ENCODE measurements at regions of chr2 and their contacts with region 1.

Region 1: GRCh38 chr2:9555297-9556141 is at the start of gene ADAM17:
- DNase-seq: peak; percentile 97 to 99 (median 98)
- ATAC-seq: peak; percentile 89 to 98 (median 96)
- H3K4me3 ChIP-seq: peak within 1 kb of the TSS; percentile 53 to 98 (median 90)
- H3K27ac ChIP-seq: peak within 1 kb of the TSS; percentile 98 to 100 (median 99)
- H3K4me1 ChIP-seq: peaks cover 11 to 60% (median 40%) of the 10 kb centered on the region in 12 donors
- H3K27me3 ChIP-seq: no peaks in the 10 kb centered on the region
- CTCF ChIP-seq: peak; percentile 24 to 71 (median 46)
- POLR2A ChIP-seq: peak; percentile 41 to 87
- total RNA-seq, gene ADAM17: 8.9 to 22.4 (median 15.1) TPM

Region 2: GRCh38 chr2:9205963-9206948 is 349.3 kb before region 1 on chr2 and contains the start of gene ASAP2:
- intact Hi-C with region 1: no loop called
- DNase-seq: peak; percentile 74 to 89 (median 77)
- ATAC-seq: peak; percentile 63 to 85 (median 82)
- H3K4me3 ChIP-seq: peak within 1 kb of the TSS; percentile 60 to 99 (median 86)
- H3K27ac ChIP-seq: peak within 1 kb of the TSS; percentile 56 to 94 (median 88)
- H3K4me1 ChIP-seq: peaks cover 0 to 40% (median 18%) of the 10 kb centered on the region in 12 donors
- H3K27me3 ChIP-seq: peaks cover 0 to 12% (median 0%) of the 10 kb centered on the region in 9 donors
- CTCF ChIP-seq: peak; percentile 65 to 94 (median 82)
- POLR2A ChIP-seq: no peak
- total RNA-seq, gene ASAP2: 7.4 to 17.0 (median 12.9) TPM

Region 3: DNA sequence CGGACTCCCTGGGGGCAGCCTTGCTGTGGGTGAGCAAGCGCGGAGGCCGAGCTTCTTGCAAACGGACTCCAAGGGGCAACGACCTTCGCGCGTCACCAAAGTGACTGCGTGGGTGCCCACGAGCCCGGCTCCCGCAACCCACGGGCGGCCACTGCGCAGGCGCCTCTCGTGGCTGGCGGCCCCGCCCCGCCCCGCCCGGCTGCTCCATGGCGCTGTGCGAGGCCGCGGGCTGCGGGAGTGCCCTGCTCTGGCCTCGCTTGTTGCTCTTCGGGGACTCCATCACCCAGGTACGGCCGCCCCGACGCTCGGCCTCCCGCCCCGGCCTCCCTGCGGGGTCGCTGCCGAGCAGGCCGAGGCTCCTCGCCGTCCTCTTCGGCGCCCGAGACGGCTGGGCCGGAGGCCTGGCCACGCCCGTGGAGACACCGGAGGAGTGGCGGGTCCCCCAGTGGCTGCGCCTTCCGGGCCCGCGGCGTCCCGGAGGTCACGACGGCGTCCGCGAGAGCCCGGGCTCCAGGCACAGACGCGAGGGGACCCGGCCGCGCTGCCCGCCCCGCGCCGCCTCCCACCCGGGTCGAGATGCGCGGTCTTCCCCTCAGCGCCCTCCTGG is 81.1 kb before region 1 on chr2 and contains the start of gene IAH1:
- intact Hi-C with region 1: loop called in 2 of 10 experiments (anchors 5 kb)
- DNase-seq: peak; percentile 60 to 86 (median 75)
- ATAC-seq: peak; percentile 57 to 93 (median 82)
- H3K4me3 ChIP-seq: peak within 1 kb of the TSS; percentile 59 to 93 (median 82)
- H3K27ac ChIP-seq: peak within 1 kb of the TSS; percentile 52 to 93 (median 84)
- H3K4me1 ChIP-seq: peaks cover 0 to 42% (median 32%) of the 10 kb centered on the region in 12 donors
- H3K27me3 ChIP-seq: no peaks in the 10 kb centered on the region
- CTCF ChIP-seq: peak in 2 of 12 donors; percentile 11 to 12
- POLR2A ChIP-seq: peak in 1 of 2 donors; percentile 65
- total RNA-seq, gene IAH1: 58.4 to 101 (median 78.0) TPM

Region 4: GRCh38 chr2:9613291-9613690 is 57.8 kb after region 1 on chr2:
- intact Hi-C with region 1: loop called in 2 of 10 experiments (anchors 5 kb)
- DNase-seq: no peak
- ATAC-seq: peak in 3 of 4 donors; percentile 29 to 44 (median 31)
- H3K4me3 ChIP-seq: no peak overlapping the region
- H3K27ac ChIP-seq: peak overlapping the region in 2 of 12 donors; percentile 31 to 41
- H3K4me1 ChIP-seq: peaks cover 0 to 92% (median 70%) of the 10 kb centered on the region in 12 donors
- H3K27me3 ChIP-seq: no peaks in the 10 kb centered on the region
- CTCF ChIP-seq: no peak
- POLR2A ChIP-seq: no peak

Region 5: DNA sequence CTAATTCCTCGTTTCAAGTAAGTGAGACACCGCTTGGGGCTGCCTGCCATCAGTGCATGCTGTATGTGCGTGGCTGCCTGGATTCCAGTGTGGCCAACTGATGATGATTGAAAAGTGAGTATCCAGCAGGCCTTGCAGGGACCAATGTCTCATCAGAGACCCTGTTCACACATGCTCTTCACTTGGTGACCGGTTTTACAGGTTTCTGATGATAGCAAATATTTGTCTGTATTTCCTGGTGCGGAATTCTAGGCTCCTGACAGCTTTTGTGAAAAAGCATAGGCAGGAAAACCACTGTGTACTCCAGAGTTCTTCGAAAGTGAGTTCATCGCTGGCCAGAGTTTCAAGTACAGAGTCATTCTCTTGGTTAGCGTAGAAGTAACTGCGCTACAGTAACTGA is 89.1 kb after region 1 on chr2:
- intact Hi-C with region 1: no loop called
- DNase-seq: no peak
- ATAC-seq: no peak
- H3K4me3 ChIP-seq: no peak overlapping the region
- H3K27ac ChIP-seq: no peak overlapping the region
- H3K4me1 ChIP-seq: peaks cover 0 to 6% (median 3%) of the 10 kb centered on the region in 12 donors
- H3K27me3 ChIP-seq: no peaks in the 10 kb centered on the region
- CTCF ChIP-seq: no peak
- POLR2A ChIP-seq: no peak

Region 6: DNA sequence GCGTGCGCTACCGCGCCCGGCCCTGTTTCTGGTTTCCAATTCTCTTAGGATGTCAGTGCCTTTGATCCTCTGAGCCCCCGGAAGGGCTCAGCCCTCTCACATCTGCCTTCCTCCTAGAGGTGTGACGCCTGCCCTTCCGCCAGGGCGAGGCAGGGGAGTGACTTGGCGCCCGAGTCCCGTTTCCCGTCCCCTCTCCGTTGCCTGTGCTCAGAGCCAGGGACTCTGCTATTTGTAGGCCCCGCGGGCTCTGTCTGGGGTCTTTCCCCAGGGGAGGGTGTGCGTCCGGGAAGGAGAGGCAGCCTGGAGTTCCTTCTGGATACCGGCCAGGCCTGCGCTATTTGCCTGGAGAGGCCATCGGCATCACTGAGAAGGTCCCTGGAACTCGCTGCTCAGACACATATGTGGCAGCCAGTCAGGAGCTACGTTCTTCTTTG is 184.0 kb after region 1 on chr2:
- intact Hi-C with region 1: loop called in 2 of 10 experiments (anchors 5 to 10 kb)
- DNase-seq: peak; percentile 90 to 93 (median 90)
- ATAC-seq: peak; percentile 71 to 94 (median 86)
- H3K4me3 ChIP-seq: peak overlapping the region in 10 of 12 donors; percentile 23 to 53 (median 44)
- H3K27ac ChIP-seq: peak overlapping the region; percentile 35 to 94 (median 86)
- H3K4me1 ChIP-seq: peaks cover 0 to 33% (median 24%) of the 10 kb centered on the region in 12 donors
- H3K27me3 ChIP-seq: no peaks in the 10 kb centered on the region
- CTCF ChIP-seq: peak in 1 of 12 donors; percentile 8
- POLR2A ChIP-seq: no peak

Region 7: DNA sequence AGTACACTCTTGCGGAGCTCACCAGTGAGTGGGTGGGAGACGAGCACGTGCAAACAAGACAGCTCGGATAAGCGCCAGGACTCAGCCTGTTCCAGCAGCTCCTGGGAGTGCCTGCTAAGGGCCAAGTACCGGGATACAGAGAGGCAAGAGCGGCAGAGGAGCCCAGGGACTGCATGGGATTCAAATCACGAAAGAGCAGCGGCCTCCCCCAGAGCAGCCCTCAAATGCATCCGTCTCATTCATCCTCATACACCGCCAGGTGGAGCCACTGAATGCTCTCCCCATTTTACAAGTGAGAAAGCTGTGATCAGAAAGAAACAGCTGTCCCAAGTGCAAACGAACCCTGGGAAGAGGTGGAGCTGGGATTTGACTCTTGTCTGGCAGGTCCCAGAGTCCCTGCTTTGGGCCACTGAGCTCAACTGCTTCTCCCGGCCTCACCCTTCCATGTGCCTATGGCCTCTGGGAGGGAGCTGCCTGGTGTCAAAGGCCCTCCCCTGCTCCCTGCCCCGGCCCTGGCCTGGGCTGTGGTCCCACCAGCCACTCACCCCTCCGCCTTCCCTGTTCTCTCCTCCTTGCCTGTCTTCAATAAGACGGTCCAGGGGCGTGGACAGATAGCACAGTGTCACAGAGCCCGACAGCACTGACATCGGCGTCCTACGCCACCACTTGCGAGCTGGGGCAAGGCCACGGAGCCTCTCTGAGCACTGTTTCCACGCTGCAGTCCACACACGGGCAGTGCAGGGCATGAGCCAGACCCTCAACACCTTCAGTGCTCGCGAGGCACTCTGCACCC is 215.0 kb after region 1 on chr2:
- intact Hi-C with region 1: loop called in 4 of 10 experiments (anchors 10 kb)
- DNase-seq: peak; percentile 65 to 84 (median 70)
- ATAC-seq: peak; percentile 38 to 60 (median 48)
- H3K4me3 ChIP-seq: peak overlapping the region in 4 of 12 donors; percentile 14 to 28 (median 20)
- H3K27ac ChIP-seq: peak overlapping the region in 10 of 12 donors; percentile 11 to 78 (median 74)
- H3K4me1 ChIP-seq: peaks cover 0 to 56% (median 23%) of the 10 kb centered on the region in 12 donors
- H3K27me3 ChIP-seq: no peaks in the 10 kb centered on the region
- CTCF ChIP-seq: peak; percentile 56 to 80 (median 72)
- POLR2A ChIP-seq: no peak

Region 8: DNA sequence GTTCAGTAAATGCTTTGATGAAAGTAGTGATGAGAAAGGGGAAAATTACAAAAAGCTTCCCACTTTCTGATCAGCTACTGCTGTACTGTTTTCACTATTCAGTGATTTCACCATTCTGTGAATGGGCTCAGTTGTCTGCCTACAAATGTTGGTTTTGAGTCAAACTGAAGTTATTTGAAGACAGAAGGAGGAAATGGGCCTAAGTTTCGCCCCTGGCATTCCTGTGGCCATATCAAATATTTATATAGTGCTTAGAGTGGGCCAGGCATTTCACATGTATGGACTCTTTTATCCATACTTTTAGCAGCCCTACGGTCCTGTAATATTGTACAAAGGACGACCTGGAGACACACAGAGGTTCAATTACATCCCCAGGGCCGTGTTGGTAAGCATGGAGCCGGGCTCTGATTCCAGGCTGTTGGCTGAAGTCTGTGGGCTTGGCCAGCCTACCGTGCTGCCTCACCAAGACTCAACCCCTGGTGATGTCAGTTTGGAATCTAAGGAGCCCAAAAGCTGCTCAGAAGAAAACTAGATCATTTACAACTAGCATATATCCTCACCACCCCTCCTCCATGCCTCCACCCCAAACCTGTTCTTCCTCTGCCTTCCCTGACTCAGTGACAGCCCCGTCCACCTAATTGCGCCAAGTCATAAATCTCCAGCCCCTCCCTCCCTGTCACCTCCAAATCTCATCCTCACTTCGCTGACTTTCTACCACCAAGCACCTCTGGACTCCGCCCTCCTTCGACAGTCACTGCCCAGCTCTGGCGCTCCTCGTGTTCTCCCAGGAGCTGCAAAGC is 385.9 kb after region 1 on chr2:
- intact Hi-C with region 1: no loop called
- DNase-seq: no peak
- ATAC-seq: no peak
- H3K4me3 ChIP-seq: no peak overlapping the region
- H3K27ac ChIP-seq: no peak overlapping the region
- H3K4me1 ChIP-seq: no peaks in the 10 kb centered on the region
- H3K27me3 ChIP-seq: peaks cover 0 to 19% (median 3%) of the 10 kb centered on the region in 9 donors
- CTCF ChIP-seq: no peak
- POLR2A ChIP-seq: no peak

Measured in heart left ventricle (tissue), 16 donors.